GM12878 (cell line): ENCODE measurements at regions of chr11 and their contacts with region 1.

Region 1: DNA sequence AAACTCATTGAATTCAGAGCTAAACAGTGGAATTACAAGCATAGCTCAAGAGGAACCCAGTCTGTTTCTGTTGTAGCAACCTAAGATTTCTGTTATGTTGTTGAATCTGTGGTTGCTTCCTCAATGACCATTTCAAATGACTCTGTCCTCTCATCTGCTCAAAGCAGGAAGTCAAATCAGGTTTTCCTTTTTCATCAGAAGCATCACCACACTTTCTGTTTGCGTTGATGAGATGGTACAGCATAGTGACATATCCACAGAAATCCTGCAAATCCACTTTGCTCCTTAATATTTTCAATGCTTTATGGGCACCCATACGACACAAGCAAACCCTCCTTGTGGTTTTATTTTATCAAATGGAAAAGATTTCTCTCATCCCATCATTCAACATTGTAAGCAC is 12.6 kb upstream of the UCP2 start:
- DNase-seq: no peak
- ATAC-seq: peak; percentile 73
- H3K4me3 ChIP-seq: no peak overlapping the region
- H3K27ac ChIP-seq: peak overlapping the region; percentile 57
- H3K4me1 ChIP-seq: peaks cover 68% of the 10 kb centered on the region
- H3K27me3 ChIP-seq: no peaks in the 10 kb centered on the region
- CTCF ChIP-seq: no peak
- EP300 ChIP-seq: peak; percentile 36 to 77; a peak in 2 of 4 replicates
- POLR2A ChIP-seq: no peak
- RAD21 ChIP-seq: no peak

Region 2: GRCh38 chr11:74011360-74012073 is 16.3 kb after region 1 on chr11:
- CTCF ChIA-PET with region 1: interaction called, 4 read pairs
- POLR2A ChIA-PET with region 1: interaction called, 4 read pairs
- RAD21 ChIA-PET with region 1: interaction called, 3 read pairs
- SMC1A ChIA-PET with region 1: interaction called, 5 read pairs
- in situ Hi-C with region 1: no loop called
- intact Hi-C with region 1: loop called (anchors 2 kb)
- DNase-seq: peak; percentile 79
- ATAC-seq: peak; percentile 93
- H3K4me3 ChIP-seq: no peak overlapping the region
- H3K27ac ChIP-seq: peak overlapping the region; percentile 56
- H3K4me1 ChIP-seq: peaks cover 20% of the 10 kb centered on the region
- H3K27me3 ChIP-seq: no peaks in the 10 kb centered on the region
- CTCF ChIP-seq: no peak
- EP300 ChIP-seq: peak; percentile 63 to 94; a peak in 3 of 4 replicates
- POLR2A ChIP-seq: no peak
- RAD21 ChIP-seq: no peak

Region 3: GRCh38 chr11:74018331-74019005 is 23.2 kb after region 1 on chr11:
- CTCF ChIA-PET with region 1: interaction called, 8 read pairs
- POLR2A ChIA-PET with region 1: interaction called, 7 read pairs
- RAD21 ChIA-PET with region 1: interaction called, 10 read pairs
- SMC1A ChIA-PET with region 1: interaction called, 20 read pairs
- in situ Hi-C with region 1: no loop called
- intact Hi-C with region 1: no loop called
- DNase-seq: no peak
- ATAC-seq: no peak
- H3K4me3 ChIP-seq: no peak overlapping the region
- H3K27ac ChIP-seq: no peak overlapping the region
- H3K4me1 ChIP-seq: peaks cover 21% of the 10 kb centered on the region
- H3K27me3 ChIP-seq: no peaks in the 10 kb centered on the region
- CTCF ChIP-seq: no peak
- EP300 ChIP-seq: no peak
- POLR2A ChIP-seq: no peak
- RAD21 ChIP-seq: no peak

Region 4: DNA sequence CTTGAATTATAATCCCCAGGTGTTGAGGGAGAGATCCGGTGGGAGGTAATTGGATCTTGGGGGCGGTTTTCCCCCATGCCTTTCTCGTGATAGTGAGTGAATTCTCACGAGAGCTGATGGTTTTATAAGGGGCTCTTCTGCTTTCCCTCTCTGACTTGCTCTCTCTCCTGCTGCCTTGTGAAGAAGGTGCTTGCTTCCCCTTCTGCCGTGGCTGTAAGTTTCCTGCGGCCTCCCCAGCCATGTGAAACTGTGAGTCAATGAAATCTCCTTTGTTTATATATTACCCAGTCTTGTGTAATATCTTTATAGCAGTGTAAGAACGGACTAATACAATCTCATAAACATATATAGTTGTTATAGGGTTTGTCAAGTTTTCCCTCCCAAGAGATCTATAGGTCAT is 439.3 kb after region 1 on chr11:
- CTCF ChIA-PET with region 1: no interaction called
- POLR2A ChIA-PET with region 1: no interaction called
- RAD21 ChIA-PET with region 1: no interaction called
- SMC1A ChIA-PET with region 1: no interaction called
- in situ Hi-C with region 1: no loop called
- intact Hi-C with region 1: no loop called
- DNase-seq: no peak
- ATAC-seq: no peak
- H3K4me3 ChIP-seq: no peak overlapping the region
- H3K27ac ChIP-seq: no peak overlapping the region
- H3K4me1 ChIP-seq: no peaks in the 10 kb centered on the region
- H3K27me3 ChIP-seq: no peaks in the 10 kb centered on the region
- CTCF ChIP-seq: no peak
- EP300 ChIP-seq: no peak
- POLR2A ChIP-seq: no peak
- RAD21 ChIP-seq: no peak